Mammary epithelial cell (primary cell): ENCODE measurements at regions of chr2 and their contacts with region 1.

Region 1: GRCh38 chr2:213476641-213477040 is 192.4 kb downstream of the SPAG16 start:
- DNase-seq: peak; percentile 36
- H3K4me3 ChIP-seq: no peak overlapping the region
- H3K27ac ChIP-seq: no peak overlapping the region
- H3K4me1 ChIP-seq: no peaks in the 10 kb centered on the region
- H3K27me3 ChIP-seq: no peaks in the 10 kb centered on the region
- CTCF ChIP-seq: no peak

Region 2: GRCh38 chr2:213500881-213501280 is 24.2 kb after region 1 on chr2:
- CTCF ChIA-PET with region 1: no interaction called
- dilution Hi-C with region 1: no loop called
- in situ Hi-C with region 1: no loop called
- intact Hi-C with region 1: loop called (anchors 1 kb)
- DNase-seq: peak; percentile 60
- H3K4me3 ChIP-seq: no peak overlapping the region
- H3K27ac ChIP-seq: no peak overlapping the region
- H3K4me1 ChIP-seq: no peaks in the 10 kb centered on the region
- H3K27me3 ChIP-seq: no peaks in the 10 kb centered on the region
- CTCF ChIP-seq: no peak